ENCODE measurements at regions of chr1 and their contacts with region 1.

Region 1: GRCh38 chr1:43389326-43390313 is at the starts of genes MED8 and SZT2:
- DNase-seq: peak; percentile 92 to 98 (median 96)
- H3K4me3 ChIP-seq: peak within 1 kb of the TSS; percentile 62 to 100 (median 92)
- H3K27ac ChIP-seq: peak within 1 kb of the TSS in 58 of 59 donors; percentile 20 to 91 (median 78)
- H3K27me3 ChIP-seq: no peaks in the 10 kb centered on the region
- CTCF ChIP-seq: peak in 15 of 56 donors; percentile 10 to 46 (median 20)
- total RNA-seq, gene MED8: 24.8 to 43.7 (median 34.9) TPM
- total RNA-seq, gene SZT2: 48.6 to 133 (median 84.0) TPM

Region 2: GRCh38 chr1:42784946-42785693 is 604.5 kb before region 1 on chr1 and contains the start of gene TMEM269:
- intact Hi-C with region 1: no loop called
- DNase-seq: peak in 8 of 10 donors; percentile 19 to 67 (median 48)
- H3K4me3 ChIP-seq: peak within 1 kb of the TSS; percentile 29 to 72 (median 53)
- H3K27ac ChIP-seq: peak within 1 kb of the TSS in 3 of 59 donors; percentile 8 to 39 (median 38)
- H3K27me3 ChIP-seq: no peaks in the 10 kb centered on the region
- CTCF ChIP-seq: no peak
- total RNA-seq, gene TMEM269: 0.14 to 2.3 (median 0.55) TPM in 101 of 120 experiments, not detected in the others

Region 3: GRCh38 chr1:43021547-43022474 is 367.8 kb before region 1 on chr1:
- intact Hi-C with region 1: no loop called
- DNase-seq: no peak
- H3K4me3 ChIP-seq: no peak overlapping the region
- H3K27ac ChIP-seq: no peak overlapping the region
- H3K27me3 ChIP-seq: no peaks in the 10 kb centered on the region
- CTCF ChIP-seq: no peak

Region 4: GRCh38 chr1:43171876-43172526 is 217.6 kb before region 1 on chr1 and contains the starts of genes CFAP57 and EBNA1BP2:
- intact Hi-C with region 1: loop called in 1 of 2 experiments (anchors 5 kb)
- DNase-seq: peak; percentile 85 to 98 (median 92)
- H3K4me3 ChIP-seq: peak within 1 kb of the TSS; percentile 62 to 100 (median 92)
- H3K27ac ChIP-seq: peak within 1 kb of the TSS in 12 of 59 donors; percentile 4 to 64 (median 35)
- H3K27me3 ChIP-seq: peaks cover 0 to 11% (median 0%) of the 10 kb centered on the region in 45 donors
- CTCF ChIP-seq: peak in 1 of 56 donors; percentile 4
- total RNA-seq, gene CFAP57: 0.50 to 4.2 (median 1.6) TPM
- total RNA-seq, gene EBNA1BP2: 24.8 to 71.9 (median 48.9) TPM

Region 5: DNA sequence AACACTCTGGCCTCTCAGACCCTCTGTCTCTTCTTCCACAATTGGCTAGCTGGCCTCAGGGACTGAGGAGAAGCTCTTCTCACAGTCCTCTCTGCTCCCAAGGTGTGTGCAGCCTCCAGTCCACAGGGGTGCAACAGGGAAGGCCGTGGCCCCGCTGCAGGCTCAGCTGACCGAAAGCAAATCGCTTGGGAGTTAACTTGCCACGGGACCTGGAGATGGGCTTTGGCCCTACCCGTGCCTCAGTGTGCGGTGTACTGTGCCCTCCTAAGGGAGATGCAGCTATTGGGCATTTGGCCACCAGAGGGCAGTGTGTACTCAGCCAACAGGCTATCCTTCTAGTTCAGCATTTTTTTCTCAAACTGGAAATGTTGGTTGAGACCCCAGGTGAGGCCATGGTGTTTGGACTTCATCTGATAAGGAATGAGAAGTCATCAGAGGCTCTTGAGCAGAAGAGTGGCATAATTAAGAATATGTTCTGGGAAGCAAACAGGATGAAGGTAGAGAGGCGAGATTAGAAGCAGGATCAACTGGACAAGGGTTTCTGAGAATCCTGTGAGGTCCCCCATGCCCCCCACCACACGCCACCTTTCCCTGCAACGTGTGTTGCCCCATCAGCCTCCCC is 162.4 kb before region 1 on chr1:
- intact Hi-C with region 1: loop called in 1 of 2 experiments (anchors 2 kb)
- DNase-seq: peak; percentile 79 to 91 (median 88)
- H3K4me3 ChIP-seq: no peak overlapping the region
- H3K27ac ChIP-seq: peak overlapping the region in 3 of 59 donors; percentile 13 to 49 (median 27)
- H3K27me3 ChIP-seq: no peaks in the 10 kb centered on the region
- CTCF ChIP-seq: peak; percentile 91 to 100 (median 97)

Measured in dorsolateral prefrontal cortex (tissue), 120 donors.